K562 (cell line): ENCODE measurements at regions of chr11 and their contacts with region 1.

Region 1: GRCh38 chr11:60251485-60252212 is 8.7 kb upstream of the MS4A4E start:
- DNase-seq: peak; percentile 27 to 76 (median 36)
- ATAC-seq: peak; percentile 87
- H3K4me3 ChIP-seq: no peak overlapping the region
- H3K27ac ChIP-seq: no peak overlapping the region
- H3K4me1 ChIP-seq: no peaks in the 10 kb centered on the region
- H3K27me3 ChIP-seq: no peaks in the 10 kb centered on the region; a peak in 1 of 5 replicates
- CTCF ChIP-seq: peak; percentile 75 to 86 (median 85)
- EP300 ChIP-seq: no peak
- POLR2A ChIP-seq: no peak
- RAD21 ChIP-seq: peak; percentile 89 to 95

Region 2: GRCh38 chr11:58318532-58318931 is 1933.1 kb before region 1 on chr11:
- CTCF ChIA-PET with region 1: no interaction called
- POLR2A ChIA-PET with region 1: no interaction called
- in situ Hi-C with region 1: no loop called
- intact Hi-C with region 1: no loop called
- DNase-seq: no peak
- ATAC-seq: no peak
- H3K4me3 ChIP-seq: no peak overlapping the region
- H3K27ac ChIP-seq: no peak overlapping the region
- H3K4me1 ChIP-seq: no peaks in the 10 kb centered on the region
- H3K27me3 ChIP-seq: no peaks in the 10 kb centered on the region
- CTCF ChIP-seq: no peak
- EP300 ChIP-seq: no peak
- POLR2A ChIP-seq: no peak
- RAD21 ChIP-seq: no peak

Region 3: GRCh38 chr11:59918987-59919589 is 332.6 kb before region 1 on chr11:
- CTCF ChIA-PET with region 1: no interaction called
- POLR2A ChIA-PET with region 1: interaction called, 3 read pairs
- in situ Hi-C with region 1: no loop called
- intact Hi-C with region 1: loop called (anchors 5 kb)
- DNase-seq: peak; percentile 34 to 74 (median 42)
- ATAC-seq: peak; percentile 71
- H3K4me3 ChIP-seq: no peak overlapping the region
- H3K27ac ChIP-seq: no peak overlapping the region
- H3K4me1 ChIP-seq: no peaks in the 10 kb centered on the region
- H3K27me3 ChIP-seq: no peaks in the 10 kb centered on the region
- CTCF ChIP-seq: peak; percentile 59 to 62 (median 61)
- EP300 ChIP-seq: no peak
- POLR2A ChIP-seq: no peak
- RAD21 ChIP-seq: peak; percentile 59 to 89

Region 4: DNA sequence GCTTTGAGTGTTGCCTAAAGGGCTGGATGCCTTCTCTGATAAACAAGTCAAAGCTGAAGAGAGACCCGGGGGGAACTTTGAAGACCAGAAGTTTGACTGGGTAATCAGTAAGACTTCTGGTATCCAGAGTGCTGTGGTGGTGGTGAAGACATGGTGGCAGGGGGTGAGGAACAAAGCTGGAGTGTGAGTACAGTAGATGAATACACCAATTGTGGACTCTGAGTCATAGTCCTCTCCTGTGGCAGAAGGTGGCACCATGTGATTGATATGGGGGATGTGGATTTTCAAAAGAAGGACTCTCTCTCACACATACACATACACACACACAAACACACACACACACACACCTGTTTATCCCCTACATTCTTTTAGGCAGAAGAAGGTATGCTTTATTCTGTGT is 81.1 kb before region 1 on chr11:
- CTCF ChIA-PET with region 1: interaction called, 5 read pairs
- POLR2A ChIA-PET with region 1: interaction called, 3 read pairs
- in situ Hi-C with region 1: no loop called
- intact Hi-C with region 1: loop called (anchors 2 kb)
- DNase-seq: no peak
- ATAC-seq: no peak
- H3K4me3 ChIP-seq: no peak overlapping the region
- H3K27ac ChIP-seq: no peak overlapping the region
- H3K4me1 ChIP-seq: no peaks in the 10 kb centered on the region; a peak in 1 of 5 replicates
- H3K27me3 ChIP-seq: no peaks in the 10 kb centered on the region
- CTCF ChIP-seq: no peak
- EP300 ChIP-seq: no peak
- POLR2A ChIP-seq: no peak
- RAD21 ChIP-seq: 0 out of 4 replicates have a peak, but pooled peaks of 1 of the 2 experiments have one; percentile 18

Region 5: GRCh38 chr11:60274416-60274815 is 22.8 kb after region 1 on chr11:
- CTCF ChIA-PET with region 1: no interaction called
- POLR2A ChIA-PET with region 1: no interaction called
- in situ Hi-C with region 1: no loop called
- intact Hi-C with region 1: no loop called
- DNase-seq: no peak
- ATAC-seq: no peak
- H3K4me3 ChIP-seq: no peak overlapping the region
- H3K27ac ChIP-seq: no peak overlapping the region
- H3K4me1 ChIP-seq: no peaks in the 10 kb centered on the region
- H3K27me3 ChIP-seq: no peaks in the 10 kb centered on the region
- CTCF ChIP-seq: no peak
- EP300 ChIP-seq: no peak
- POLR2A ChIP-seq: no peak
- RAD21 ChIP-seq: no peak

Region 6: DNA sequence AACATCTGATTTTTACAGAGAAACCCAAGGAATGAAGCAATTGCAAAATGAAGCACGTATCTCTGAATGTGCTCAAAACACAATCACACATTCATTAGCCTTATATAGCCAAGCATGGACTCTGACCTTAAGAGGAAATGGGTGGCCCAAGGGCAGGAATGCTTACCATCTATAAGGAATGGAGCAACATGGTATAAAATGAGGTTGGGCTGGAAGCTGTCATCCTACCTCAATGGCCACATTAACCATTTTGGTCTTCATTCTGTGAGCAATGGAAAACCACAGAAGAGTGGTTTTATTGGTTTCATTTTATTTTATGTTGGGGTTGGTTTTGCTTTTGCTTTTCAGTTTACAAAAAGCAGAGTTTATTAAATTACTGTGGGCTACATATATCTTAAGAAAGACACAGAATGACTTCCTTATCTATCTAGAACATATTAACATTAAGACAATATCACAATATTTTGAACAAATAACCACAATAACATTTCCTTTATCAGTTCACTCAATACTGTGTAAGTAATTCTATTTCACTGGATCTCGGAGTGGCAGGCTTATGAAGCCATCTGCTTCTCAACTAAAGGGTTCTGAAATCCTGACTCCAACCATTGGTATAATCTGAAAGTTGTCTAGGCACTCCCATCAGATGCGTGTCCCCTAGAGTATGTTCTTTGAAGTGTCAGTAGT is 252.7 kb after region 1 on chr11:
- CTCF ChIA-PET with region 1: no interaction called
- POLR2A ChIA-PET with region 1: no interaction called
- in situ Hi-C with region 1: no loop called
- intact Hi-C with region 1: no loop called
- DNase-seq: no peak
- ATAC-seq: no peak
- H3K4me3 ChIP-seq: no peak overlapping the region
- H3K27ac ChIP-seq: no peak overlapping the region
- H3K4me1 ChIP-seq: no peaks in the 10 kb centered on the region
- H3K27me3 ChIP-seq: no peaks in the 10 kb centered on the region; a peak in 1 of 5 replicates
- CTCF ChIP-seq: no peak
- EP300 ChIP-seq: no peak
- POLR2A ChIP-seq: no peak
- RAD21 ChIP-seq: no peak